BJ (cell line): ENCODE measurements at regions of chr17 and their contacts with region 1.

Region 1: DNA sequence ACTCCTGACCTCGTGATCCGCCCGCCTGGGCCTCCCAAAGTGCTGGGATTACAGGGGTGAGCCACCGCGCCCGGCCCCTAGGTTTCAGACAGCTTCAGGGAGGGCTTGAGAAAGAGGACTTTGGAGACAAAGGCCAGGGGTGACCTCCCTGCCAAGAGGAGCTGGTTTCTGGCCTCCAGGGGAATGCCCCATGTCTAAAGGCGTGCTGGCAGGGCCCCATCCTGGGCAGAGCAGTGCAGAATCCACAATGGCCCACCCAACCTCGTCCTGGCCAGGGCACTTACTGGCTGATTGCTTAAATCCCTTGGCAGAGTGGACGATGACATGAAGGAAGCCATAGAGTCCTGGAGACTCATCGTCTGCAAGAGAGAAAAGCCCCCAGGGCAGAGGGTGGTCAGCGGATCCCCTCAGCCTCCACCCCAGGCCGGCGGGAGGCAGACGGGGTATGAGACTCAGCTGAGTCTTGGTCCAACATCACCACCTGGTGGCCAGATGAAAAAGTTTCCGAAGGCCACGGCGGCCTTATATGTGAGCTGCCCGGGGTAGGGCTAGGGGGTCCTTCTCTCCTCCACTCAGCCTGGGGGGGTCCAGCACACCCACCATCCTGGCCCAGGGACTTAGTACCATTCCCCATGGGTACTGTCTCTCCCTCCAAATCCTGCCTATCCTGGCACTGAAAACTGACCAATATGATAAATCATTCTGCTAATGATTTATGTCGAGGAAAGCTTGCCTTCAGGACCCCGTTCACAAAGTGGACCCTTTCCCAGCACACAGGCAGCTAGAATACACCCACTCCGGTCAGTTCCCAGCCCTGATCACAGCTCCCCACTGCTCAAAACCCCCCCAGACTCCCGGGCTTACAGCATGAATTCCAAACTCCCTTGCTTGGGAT is 59.1 kb downstream of the TIMM22 start:
- DNase-seq: no peak
- H3K4me3 ChIP-seq: no peak overlapping the region
- H3K27me3 ChIP-seq: no peaks in the 10 kb centered on the region
- CTCF ChIP-seq: peak; percentile 74

Region 2: DNA sequence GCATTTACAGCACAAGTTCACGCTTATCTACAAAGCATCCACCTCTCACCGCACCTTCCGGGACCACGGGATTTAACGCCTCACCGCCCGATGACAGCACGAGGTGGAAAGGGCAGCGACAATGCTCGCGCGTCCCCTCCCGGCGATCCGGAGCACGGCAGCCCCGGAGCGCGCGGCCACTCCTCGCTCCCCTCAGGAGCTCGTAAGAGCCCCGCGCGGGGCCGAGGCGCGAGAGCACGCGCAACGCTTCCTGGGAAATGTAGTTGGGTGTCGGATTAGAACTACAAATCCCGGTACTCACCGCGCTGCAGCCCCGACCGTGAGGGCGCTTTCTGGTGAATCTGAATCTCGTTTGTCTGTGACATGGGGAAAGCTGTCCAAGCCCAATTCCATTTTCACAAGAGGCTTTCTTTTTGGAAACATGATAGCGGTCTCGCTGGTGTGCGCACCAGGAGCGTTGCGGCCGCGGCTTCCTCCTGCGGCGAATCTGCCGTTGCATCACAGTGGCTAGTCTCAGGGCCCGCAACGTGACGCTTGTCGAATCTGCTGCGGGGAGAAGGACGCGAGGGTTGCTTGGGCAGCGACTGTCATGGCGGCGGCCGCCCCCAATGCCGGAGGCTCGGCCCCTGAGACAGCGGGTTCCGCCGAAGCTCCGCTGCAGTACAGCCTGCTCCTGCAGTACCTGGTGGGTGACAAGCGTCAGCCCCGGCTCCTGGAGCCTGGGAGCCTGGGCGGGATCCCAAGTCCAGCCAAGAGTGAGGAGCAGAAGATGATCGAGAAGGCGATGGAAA is 59.2 kb before region 1 on chr17 and contains the start of gene TIMM22:
- CTCF ChIA-PET with region 1: interaction called, 54 read pairs
- POLR2A ChIA-PET with region 1: no interaction called
- DNase-seq: peak; percentile 78
- H3K4me3 ChIP-seq: peak within 1 kb of the TSS; percentile 100
- H3K27me3 ChIP-seq: no peaks in the 10 kb centered on the region
- CTCF ChIP-seq: peak; percentile 88
- polyA plus RNA-seq, gene TIMM22: 12.6 and 14.3 TPM in 2 replicates

Region 3: DNA sequence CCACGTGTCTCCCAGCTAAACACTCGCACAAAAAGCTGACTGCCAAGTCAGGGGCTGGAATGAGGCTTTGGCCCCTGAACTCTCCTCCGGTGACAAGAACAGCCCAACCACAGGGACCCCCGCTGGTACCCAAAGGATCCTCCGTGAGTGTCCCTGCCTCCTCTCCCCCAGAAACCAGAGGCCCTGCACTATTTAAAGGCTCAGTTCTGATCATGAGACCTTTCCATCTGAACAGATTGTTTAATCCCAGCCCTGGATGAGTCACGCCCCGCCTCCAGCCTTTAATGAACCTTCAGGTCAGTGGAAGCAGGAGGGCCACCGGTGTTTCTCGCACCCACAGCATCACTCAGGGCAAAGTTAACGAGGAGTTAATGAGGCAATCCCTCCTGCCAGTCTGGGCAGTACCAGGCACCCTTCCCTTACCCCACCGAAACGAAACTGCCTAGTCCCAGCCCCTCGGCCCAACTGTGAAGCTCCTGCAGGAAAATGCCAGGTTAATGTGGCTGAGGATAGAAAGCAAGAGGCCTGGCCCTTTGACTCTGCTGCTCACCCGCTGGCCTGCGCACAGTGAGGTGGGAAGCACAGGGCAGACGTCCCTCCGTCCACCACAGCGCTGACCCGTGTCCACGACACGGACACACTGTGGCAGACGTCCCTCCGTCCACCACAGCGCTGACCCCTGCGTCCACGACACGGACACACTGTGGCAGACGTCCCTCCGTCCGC is 26.6 kb before region 1 on chr17:
- CTCF ChIA-PET with region 1: interaction called, 21 read pairs
- POLR2A ChIA-PET with region 1: no interaction called
- DNase-seq: no peak
- H3K4me3 ChIP-seq: no peak overlapping the region
- H3K27me3 ChIP-seq: no peaks in the 10 kb centered on the region
- CTCF ChIP-seq: no peak

Region 4: DNA sequence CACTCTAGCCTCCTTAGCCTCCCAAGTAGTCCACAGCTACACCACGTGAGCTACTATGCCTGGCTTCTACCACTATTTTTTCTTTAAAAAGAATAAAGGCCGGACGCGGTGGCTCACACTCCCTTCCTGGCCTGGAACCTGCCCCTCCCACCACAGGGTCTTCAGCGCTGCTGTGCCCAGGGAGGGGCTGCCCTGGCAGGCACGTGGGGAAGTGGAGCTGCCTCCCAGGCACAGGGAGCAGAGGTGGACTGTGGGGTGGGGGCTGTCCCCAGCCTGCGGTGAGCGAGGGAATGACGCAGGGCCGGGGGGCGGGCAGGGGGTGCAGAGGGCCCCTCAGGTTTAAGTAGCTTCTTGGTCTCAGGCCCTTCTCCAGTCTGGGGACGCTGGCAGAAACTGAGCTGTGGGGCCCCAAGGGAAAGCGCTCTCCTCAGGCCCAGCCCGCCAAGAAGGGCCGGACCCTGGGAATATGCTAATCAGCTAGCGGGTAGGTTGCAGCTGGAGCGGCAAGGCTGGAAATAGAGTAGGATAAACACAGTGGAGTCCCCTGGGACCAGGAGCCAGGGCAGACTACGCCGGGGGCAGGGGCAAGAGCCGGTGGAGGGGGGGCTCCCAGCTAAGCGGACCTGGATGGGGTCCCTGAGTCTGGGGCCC is 12.3 kb before region 1 on chr17:
- CTCF ChIA-PET with region 1: interaction called, 47 read pairs
- POLR2A ChIA-PET with region 1: no interaction called
- DNase-seq: no peak
- H3K4me3 ChIP-seq: no peak overlapping the region
- H3K27me3 ChIP-seq: no peaks in the 10 kb centered on the region
- CTCF ChIP-seq: no peak

Region 5: GRCh38 chr17:1241929-1242328 is 185.9 kb after region 1 on chr17:
- CTCF ChIA-PET with region 1: no interaction called
- POLR2A ChIA-PET with region 1: no interaction called
- DNase-seq: peak; percentile 29
- H3K4me3 ChIP-seq: no peak overlapping the region
- H3K27me3 ChIP-seq: 0 out of 2 replicates have a peak, but pooled peaks cover 2% of the 10 kb centered on the region
- CTCF ChIP-seq: no peak